Common myeloid progenitor, CD34-positive (primary cell): ENCODE measurements at regions of chr17 and their contacts with region 1.

Region 1: GRCh38 chr17:82917691-82918345 is 78.0 kb upstream of the ZNF750 start:
- DNase-seq: peak; percentile 14 to 43 (median 40)
- H3K4me3 ChIP-seq: no peak overlapping the region
- H3K27ac ChIP-seq: no peak overlapping the region
- H3K4me1 ChIP-seq: peaks cover 0 to under 1% (median 0%) of the 10 kb centered on the region in 4 experiments
- H3K27me3 ChIP-seq: no peaks in the 10 kb centered on the region

Region 2: DNA sequence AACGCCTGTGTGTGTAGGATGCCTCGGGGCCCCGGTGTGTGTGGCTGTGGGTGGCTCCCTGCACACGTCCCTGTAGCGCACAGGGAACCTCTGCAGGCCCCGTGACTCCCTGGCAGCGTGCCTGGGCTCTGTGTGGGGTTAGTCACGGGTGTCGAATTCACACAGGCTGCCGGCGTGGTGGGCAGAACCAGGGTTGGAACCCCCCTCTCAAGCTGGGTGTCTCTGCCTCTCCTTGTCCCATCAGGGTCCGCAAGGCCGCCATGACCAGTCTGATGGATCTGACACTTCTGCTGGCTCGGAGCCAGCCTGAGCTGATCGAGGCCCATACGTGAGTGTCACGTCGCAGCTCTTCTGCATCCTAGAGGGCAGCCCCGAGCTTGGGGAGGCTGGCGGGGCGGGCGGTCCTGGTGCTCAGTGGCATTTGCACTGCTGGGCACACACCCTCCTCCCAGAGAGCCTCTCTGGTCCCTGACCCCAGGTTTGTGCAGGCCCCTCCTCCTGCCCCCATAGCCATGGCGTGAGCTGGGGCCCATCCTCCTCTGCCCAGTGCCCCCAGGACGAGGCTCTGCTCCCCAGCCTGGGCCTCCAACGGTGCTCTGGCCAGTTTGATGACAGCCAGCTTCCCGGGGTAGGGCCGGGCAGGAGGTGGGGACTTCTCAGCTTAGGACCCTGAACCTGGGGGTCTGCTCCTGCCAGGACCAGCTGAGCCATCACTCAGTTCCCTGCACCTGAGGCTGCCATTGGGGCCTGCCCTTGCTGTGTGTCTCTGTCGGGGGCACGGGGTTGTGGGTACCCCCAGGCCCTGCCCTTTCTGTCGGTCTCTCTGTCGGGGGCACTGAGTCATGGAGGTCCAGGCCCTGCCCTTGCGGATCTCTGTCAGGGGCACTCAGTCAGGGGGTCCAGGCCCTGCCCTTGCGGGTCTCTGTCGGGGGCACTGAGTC is 10.1 kb after region 1 on chr17:
- CTCF ChIA-PET with region 1: interaction called, 10 read pairs
- POLR2A ChIA-PET with region 1: no interaction called
- DNase-seq: no peak
- H3K4me3 ChIP-seq: no peak overlapping the region
- H3K27ac ChIP-seq: no peak overlapping the region
- H3K4me1 ChIP-seq: no peaks in the 10 kb centered on the region
- H3K27me3 ChIP-seq: no peaks in the 10 kb centered on the region